SK-N-SH (cell line): ENCODE measurements at regions of chr7 and their contacts with region 1.

Region 1: GRCh38 chr7:100190048-100190711 is 12.5 kb downstream of the STAG3 start:
- DNase-seq: peak; percentile 23
- H3K4me3 ChIP-seq: no peak overlapping the region
- H3K27ac ChIP-seq: no peak overlapping the region
- H3K4me1 ChIP-seq: peaks cover 0 to 6% of the 10 kb centered on the region in 2 experiments; a peak in 1 of 4 replicates
- H3K27me3 ChIP-seq: no peaks in the 10 kb centered on the region
- CTCF ChIP-seq: peak; percentile 67
- EP300 ChIP-seq: no peak
- RAD21 ChIP-seq: peak; percentile 47

Region 2: DNA sequence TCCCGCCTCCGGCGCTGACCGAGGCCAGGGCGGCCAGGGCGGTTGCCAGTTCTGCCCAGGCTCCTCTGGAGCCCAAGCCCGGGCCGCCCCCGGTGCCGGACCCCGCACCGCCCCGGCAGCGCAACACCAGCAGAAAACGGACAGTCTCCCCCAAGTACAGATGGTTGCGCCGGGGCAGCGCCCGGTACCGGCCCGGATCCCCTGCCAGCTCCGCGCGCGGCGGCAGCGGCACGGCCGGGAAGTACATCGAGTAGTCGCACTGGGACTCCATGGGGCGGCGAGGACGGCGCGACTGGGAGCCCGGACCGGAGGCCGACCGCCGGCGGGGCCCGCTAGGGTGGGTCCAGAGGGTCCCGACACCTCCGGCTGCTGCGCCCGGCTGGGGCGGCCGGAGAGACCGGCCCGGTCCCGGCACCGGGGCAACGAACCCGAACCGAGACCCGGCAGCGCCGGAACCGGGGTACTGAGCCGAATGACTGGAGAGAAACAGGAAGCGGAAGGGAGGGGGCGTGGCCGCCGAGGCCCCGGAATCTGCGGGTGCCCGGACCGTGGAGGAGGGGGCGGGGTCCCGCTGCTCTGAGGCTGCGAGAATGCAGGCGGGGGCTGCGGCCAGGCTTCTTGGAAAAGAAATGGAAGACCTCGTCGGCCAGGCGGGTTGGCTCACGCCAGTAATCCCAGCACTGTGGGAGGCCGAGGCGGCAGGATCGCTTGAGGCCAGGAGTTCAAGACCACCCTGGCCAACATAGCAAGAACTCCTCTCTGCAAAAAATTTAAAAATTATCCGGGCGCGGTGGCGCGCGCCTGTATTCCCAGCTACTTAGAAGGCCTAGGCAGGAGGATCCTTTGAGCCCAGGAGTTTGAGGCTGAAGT is 31.7 kb before region 1 on chr7 and contains the start of gene TRAPPC14:
- CTCF ChIA-PET with region 1: no interaction called
- POLR2A ChIA-PET with region 1: no interaction called
- DNase-seq: peak; percentile 100
- H3K4me3 ChIP-seq: peak within 1 kb of the TSS; percentile 87 to 93
- H3K27ac ChIP-seq: peak within 1 kb of the TSS; percentile 36 to 62
- H3K4me1 ChIP-seq: peaks cover 11 to 19% of the 10 kb centered on the region in 2 experiments; a peak in 2 of 4 replicates
- H3K27me3 ChIP-seq: no peaks in the 10 kb centered on the region
- CTCF ChIP-seq: no peak
- EP300 ChIP-seq: peak in 1 of 2 experiments; percentile 30; a peak in 1 of 4 replicates
- RAD21 ChIP-seq: no peak
- polyA plus RNA-seq, gene TRAPPC14: 13.9 and 16.4 TPM in 2 replicates

Region 3: GRCh38 chr7:100177045-100178001 is 12.9 kb before region 1 on chr7 and contains the starts of genes GPC2 and STAG3:
- CTCF ChIA-PET with region 1: interaction called, 31 read pairs
- POLR2A ChIA-PET with region 1: no interaction called
- DNase-seq: peak; percentile 100
- H3K4me3 ChIP-seq: peak within 1 kb of the TSS; percentile 82 to 98
- H3K27ac ChIP-seq: peak within 1 kb of the TSS in 1 of 2 experiments; percentile 69; a peak in 1 of 4 replicates
- H3K4me1 ChIP-seq: peaks cover 0 to 16% of the 10 kb centered on the region in 2 experiments; a peak in 1 of 4 replicates
- H3K27me3 ChIP-seq: no peaks in the 10 kb centered on the region
- CTCF ChIP-seq: no peak
- EP300 ChIP-seq: no peak
- RAD21 ChIP-seq: no peak
- polyA plus RNA-seq, gene GPC2: 12.9 and 14.2 TPM in 2 replicates
- polyA plus RNA-seq, gene STAG3: 0.10 and 0.31 TPM in 2 replicates

Region 4: GRCh38 chr7:100200693-100201092 is 10.5 kb after region 1 on chr7:
- CTCF ChIA-PET with region 1: interaction called, 23 read pairs
- POLR2A ChIA-PET with region 1: no interaction called
- DNase-seq: no peak
- H3K4me3 ChIP-seq: no peak overlapping the region
- H3K27ac ChIP-seq: no peak overlapping the region
- H3K4me1 ChIP-seq: no peaks in the 10 kb centered on the region
- H3K27me3 ChIP-seq: no peaks in the 10 kb centered on the region; the same call in 1 of the 2 replicates
- CTCF ChIP-seq: no peak
- EP300 ChIP-seq: no peak
- RAD21 ChIP-seq: no peak

Region 5: GRCh38 chr7:100266576-100267354 is 76.6 kb after region 1 on chr7:
- CTCF ChIA-PET with region 1: no interaction called
- POLR2A ChIA-PET with region 1: no interaction called
- DNase-seq: no peak
- H3K4me3 ChIP-seq: no peak overlapping the region
- H3K27ac ChIP-seq: no peak overlapping the region
- H3K4me1 ChIP-seq: peaks cover 7 to 8% of the 10 kb centered on the region in 2 experiments; a peak in 1 of 4 replicates
- H3K27me3 ChIP-seq: no peaks in the 10 kb centered on the region
- CTCF ChIP-seq: no peak
- EP300 ChIP-seq: no peak
- RAD21 ChIP-seq: no peak